Heart right ventricle (tissue), 16 donors: ENCODE measurements at regions of chr1 and their contacts with region 1.

Region 1: DNA sequence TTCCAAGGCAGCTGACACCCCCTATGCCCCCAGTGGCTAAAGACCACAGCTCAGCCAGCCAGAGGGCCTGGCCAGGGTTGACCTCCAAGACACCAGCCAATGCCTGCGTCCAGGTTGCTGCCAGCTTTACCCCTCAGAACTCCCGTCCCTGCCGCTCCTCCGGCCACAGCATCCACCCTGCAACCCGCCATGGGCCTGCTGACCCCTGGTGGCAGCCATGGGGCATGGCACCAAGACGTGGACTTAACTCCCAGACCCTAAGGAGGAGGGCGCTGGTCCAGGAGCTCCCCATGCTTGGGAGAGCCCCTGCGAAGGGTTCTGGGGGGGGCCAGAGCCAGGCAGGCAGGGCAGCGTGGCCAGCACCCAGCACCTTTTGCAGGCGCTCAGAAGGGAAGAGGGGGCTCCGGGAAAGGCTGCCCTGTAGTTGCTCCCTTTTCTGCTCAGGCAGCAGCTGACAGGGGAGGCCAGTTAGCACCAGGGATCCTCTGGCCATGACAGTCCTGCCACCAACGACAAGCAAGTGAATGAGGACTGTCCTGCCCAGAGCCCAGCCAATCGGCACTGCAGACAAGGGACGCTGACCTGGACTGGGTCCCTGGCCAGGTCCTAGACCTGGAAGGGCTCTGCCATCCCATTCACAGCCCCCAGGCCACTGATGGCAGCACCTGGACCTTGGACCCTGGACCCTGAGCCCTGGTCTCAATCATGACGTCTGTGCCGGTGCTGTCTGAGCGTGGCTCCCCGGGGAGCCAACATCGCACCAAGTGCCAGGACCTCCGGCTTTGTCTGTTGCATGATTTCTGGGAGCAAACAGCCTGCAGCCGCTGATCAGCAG is 246.2 kb downstream of the NPHP4 start:
- DNase-seq: peak; percentile 44 to 66
- ATAC-seq: peak; percentile 56 to 91 (median 79)
- H3K4me3 ChIP-seq: no peak overlapping the region
- H3K27ac ChIP-seq: no peak overlapping the region
- H3K4me1 ChIP-seq: peaks cover 0 to 5% (median 0%) of the 10 kb centered on the region in 9 donors
- H3K27me3 ChIP-seq: peaks cover 0 to 83% (median 32%) of the 10 kb centered on the region in 7 donors
- CTCF ChIP-seq: peak; percentile 82 to 96 (median 90)

Region 2: DNA sequence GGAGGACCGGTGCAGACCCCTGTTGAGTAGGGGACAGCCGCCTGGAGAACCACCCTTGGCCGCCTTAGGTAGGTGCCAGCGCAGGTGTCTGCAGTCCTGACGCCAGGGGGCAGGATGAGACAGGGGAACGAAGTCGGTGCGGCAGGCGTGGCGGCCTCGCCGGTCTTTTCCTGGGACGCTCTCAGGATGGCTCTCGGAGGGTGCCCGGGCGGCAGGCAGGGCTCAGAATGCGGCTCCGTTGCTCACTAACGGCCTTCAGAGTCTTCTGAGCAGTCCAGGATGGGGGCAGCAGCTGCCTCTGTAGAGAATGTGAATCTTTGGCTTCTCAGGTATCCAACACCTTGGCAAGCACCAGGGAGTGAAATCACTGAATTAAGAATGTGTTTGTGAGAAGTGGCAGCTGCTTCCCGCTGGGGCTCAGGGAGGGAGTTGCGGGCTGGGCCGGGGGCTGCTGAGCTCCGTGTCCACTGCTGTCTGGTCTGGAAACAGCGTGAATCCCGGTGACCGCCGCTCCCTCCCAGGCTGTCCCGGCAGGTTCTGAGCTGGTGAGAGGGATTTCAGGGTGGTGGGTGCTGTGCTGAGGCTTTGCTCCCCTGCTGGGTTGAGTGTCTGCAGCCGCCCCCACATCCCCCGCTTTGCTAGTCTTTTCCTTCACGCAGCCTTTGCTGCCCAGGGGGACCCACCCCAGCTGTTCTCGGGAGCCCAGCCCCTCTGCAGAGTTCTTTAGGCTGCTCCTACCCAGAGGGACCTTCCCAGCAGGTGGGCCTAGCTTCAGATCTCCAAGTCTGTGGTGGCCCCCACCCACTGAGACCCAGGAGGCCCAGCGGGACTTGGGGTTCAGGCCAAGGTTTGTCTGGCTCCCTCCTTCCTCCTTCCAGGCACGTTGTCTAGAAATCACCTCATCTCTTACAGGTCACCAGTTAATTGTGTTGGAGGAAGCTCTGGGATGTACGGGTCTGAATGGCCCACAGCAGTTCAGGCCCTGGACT is 1834.8 kb before region 1 on chr1:
- intact Hi-C with region 1: loop called in 3 of 10 experiments (anchors 5 to 10 kb)
- DNase-seq: peak; percentile 52 to 70
- ATAC-seq: peak in 7 of 8 donors; percentile 41 to 79 (median 72)
- H3K4me3 ChIP-seq: no peak overlapping the region
- H3K27ac ChIP-seq: no peak overlapping the region
- H3K4me1 ChIP-seq: peaks cover 0 to 5% (median 0%) of the 10 kb centered on the region in 9 donors
- H3K27me3 ChIP-seq: peaks cover 0 to 44% (median 30%) of the 10 kb centered on the region in 7 donors
- CTCF ChIP-seq: peak; percentile 34 to 75 (median 70)

Region 3: GRCh38 chr1:5637171-5637570 is 108.8 kb before region 1 on chr1:
- intact Hi-C with region 1: loop called in 7 of 10 experiments (anchors 1 to 10 kb)
- DNase-seq: no peak
- ATAC-seq: no peak
- H3K4me3 ChIP-seq: no peak overlapping the region
- H3K27ac ChIP-seq: no peak overlapping the region
- H3K4me1 ChIP-seq: no peaks in the 10 kb centered on the region
- H3K27me3 ChIP-seq: peaks cover 0 to 46% (median 26%) of the 10 kb centered on the region in 7 donors
- CTCF ChIP-seq: peak in 7 of 9 donors; percentile 27 to 53 (median 35)